ENCODE measurements at regions of chr5 and their contacts with region 1.

Region 1: GRCh38 chr5:67677422-67677970 is 480.9 kb upstream of the CD180 start:
- DNase-seq: no peak
- ATAC-seq: no peak
- H3K4me3 ChIP-seq: no peak overlapping the region
- H3K27ac ChIP-seq: no peak overlapping the region
- H3K4me1 ChIP-seq: peaks cover 5% of the 10 kb centered on the region
- H3K27me3 ChIP-seq: no peaks in the 10 kb centered on the region

Region 2: DNA sequence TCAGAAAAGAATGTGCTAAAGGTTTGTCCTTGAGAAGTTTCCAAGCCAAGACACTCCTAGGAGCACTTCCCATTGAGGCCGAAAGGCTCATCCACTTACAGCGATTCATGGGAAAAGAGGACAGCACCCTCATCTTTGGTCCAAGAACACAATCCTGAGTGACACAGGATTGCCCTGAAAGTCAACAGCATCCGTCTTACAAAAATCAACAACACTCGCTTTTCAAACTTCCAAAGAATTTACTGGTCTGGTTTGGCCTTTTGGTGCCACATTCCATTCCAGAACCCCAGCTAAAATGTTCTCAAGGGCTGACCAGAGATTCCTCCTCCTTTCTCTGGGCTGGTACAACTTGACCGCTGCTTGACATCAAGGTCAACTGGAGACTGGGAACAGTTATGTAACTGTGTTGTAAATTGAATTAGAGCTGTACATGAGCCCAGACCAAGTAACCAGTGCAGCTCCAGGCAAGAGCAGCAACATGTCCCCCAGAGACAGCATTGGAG is 122.3 kb after region 1 on chr5:
- intact Hi-C with region 1: loop called in 1 of 4 experiments (anchors 5 kb)
- DNase-seq: peak; percentile 40 to 78 (median 48)
- ATAC-seq: peak; percentile 88 to 97
- H3K4me3 ChIP-seq: no peak overlapping the region
- H3K27ac ChIP-seq: peak overlapping the region; percentile 59
- H3K4me1 ChIP-seq: no peaks in the 10 kb centered on the region
- H3K27me3 ChIP-seq: no peaks in the 10 kb centered on the region

Region 3: DNA sequence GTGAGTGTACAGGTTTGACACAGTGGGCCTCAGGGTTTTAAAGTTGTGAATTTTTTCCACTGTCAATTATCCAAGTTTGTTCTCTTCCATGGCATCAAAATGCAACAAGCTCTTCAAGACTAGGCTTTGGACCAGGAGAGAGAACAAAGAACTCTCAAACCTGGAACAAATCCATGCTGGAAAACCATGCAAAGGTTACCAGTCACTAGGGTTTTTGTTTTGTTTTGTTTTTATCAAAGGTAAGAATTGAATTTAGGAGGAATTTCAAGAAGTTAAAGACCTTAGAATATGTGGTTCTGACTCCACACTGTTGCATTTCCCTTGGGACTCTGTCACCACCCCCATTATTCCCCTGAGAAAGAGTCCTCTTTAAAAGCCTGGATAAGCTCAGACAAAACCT is 346.9 kb after region 1 on chr5:
- intact Hi-C with region 1: no loop called
- DNase-seq: no peak
- ATAC-seq: no peak
- H3K4me3 ChIP-seq: no peak overlapping the region
- H3K27ac ChIP-seq: no peak overlapping the region
- H3K4me1 ChIP-seq: no peaks in the 10 kb centered on the region
- H3K27me3 ChIP-seq: no peaks in the 10 kb centered on the region